IMR-90 (cell line): ENCODE measurements at regions of chr12 and their contacts with region 1.

Region 1: GRCh38 chr12:100058482-100059029 is 73.8 kb upstream of the ANKS1B start:
- DNase-seq: peak; percentile 96
- ATAC-seq: peak; percentile 91
- H3K4me3 ChIP-seq: no peak overlapping the region
- H3K27ac ChIP-seq: no peak overlapping the region
- H3K4me1 ChIP-seq: no peaks in the 10 kb centered on the region
- H3K27me3 ChIP-seq: no peaks in the 10 kb centered on the region
- CTCF ChIP-seq: peak; percentile 58
- POLR2A ChIP-seq: no peak
- RAD21 ChIP-seq: peak; percentile 73

Region 2: DNA sequence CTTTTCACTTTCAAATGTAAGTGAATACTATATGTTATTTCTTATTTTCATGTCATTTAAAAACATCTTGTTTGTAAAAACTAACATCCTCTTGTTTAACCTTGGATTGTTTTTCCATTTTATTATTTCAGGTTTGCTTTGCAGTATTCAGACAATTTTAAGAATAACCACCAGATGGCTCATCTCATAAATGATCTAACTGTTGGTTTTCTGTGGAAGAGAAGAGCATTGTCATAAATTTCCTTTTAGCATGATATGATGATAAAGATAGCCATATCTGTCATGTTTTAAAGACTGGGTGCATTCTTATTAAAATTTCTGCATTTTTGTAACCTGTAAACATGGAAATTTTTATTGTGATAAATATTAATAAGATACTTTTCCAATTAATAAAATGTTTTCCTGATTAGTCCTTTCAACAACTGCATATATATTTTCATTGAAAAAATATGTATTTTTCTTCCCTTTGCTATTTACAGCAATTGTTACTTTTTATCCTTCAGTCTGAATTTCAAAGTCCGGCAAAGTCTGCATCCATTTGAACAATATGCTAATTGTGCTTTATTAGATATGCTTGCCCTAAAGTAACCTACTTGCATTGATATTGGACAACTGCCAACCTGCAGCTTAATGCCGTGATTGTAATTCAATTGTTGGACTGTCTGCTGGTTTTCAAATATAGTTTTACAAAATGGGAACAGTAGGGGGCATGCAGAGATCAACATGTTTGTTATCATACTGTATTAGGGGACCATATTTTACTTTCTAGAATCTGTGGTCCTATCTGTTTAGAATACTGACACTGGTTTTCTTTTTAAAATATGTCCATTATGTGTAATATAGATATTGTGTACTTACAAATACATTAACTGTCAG is 247.6 kb before region 1 on chr12:
- CTCF ChIA-PET with region 1: no interaction called
- POLR2A ChIA-PET with region 1: no interaction called
- dilution Hi-C with region 1: no loop called
- in situ Hi-C with region 1: no loop called
- intact Hi-C with region 1: loop called (anchors 10 kb)
- DNase-seq: peak; percentile 18
- ATAC-seq: no peak
- H3K4me3 ChIP-seq: no peak overlapping the region
- H3K27ac ChIP-seq: no peak overlapping the region
- H3K4me1 ChIP-seq: no peaks in the 10 kb centered on the region
- H3K27me3 ChIP-seq: no peaks in the 10 kb centered on the region
- CTCF ChIP-seq: peak; percentile 33
- POLR2A ChIP-seq: no peak
- RAD21 ChIP-seq: peak; percentile 33; the same call in 1 of the 2 replicates

Region 3: DNA sequence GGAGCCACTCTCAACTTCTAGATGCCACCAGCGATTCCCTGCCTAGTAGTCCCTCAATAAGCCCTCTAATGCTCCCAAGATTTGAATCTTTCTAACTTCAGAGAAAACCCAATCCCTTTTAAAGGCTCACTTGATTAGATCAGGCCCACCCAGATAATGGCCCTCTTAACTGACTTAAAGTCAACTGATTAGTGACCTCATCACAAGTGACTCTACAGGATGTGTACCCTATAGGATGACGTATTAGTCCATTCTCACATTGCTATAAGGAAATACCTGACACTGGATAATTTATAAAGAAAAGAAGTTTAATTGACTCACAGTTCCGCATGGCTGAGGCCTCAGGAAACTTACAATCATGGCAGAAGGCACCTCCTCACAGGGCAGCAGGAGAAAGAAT is 122.9 kb before region 1 on chr12:
- CTCF ChIA-PET with region 1: no interaction called
- POLR2A ChIA-PET with region 1: no interaction called
- dilution Hi-C with region 1: no loop called
- in situ Hi-C with region 1: no loop called
- intact Hi-C with region 1: no loop called
- DNase-seq: no peak
- ATAC-seq: no peak
- H3K4me3 ChIP-seq: no peak overlapping the region
- H3K27ac ChIP-seq: no peak overlapping the region
- H3K4me1 ChIP-seq: no peaks in the 10 kb centered on the region
- H3K27me3 ChIP-seq: no peaks in the 10 kb centered on the region
- CTCF ChIP-seq: no peak
- POLR2A ChIP-seq: no peak
- RAD21 ChIP-seq: no peak

Region 4: GRCh38 chr12:100215209-100215608 is 156.7 kb after region 1 on chr12:
- CTCF ChIA-PET with region 1: no interaction called
- POLR2A ChIA-PET with region 1: no interaction called
- dilution Hi-C with region 1: no loop called
- in situ Hi-C with region 1: no loop called
- intact Hi-C with region 1: loop called (anchors 5 kb)
- DNase-seq: no peak
- ATAC-seq: no peak
- H3K4me3 ChIP-seq: no peak overlapping the region
- H3K27ac ChIP-seq: no peak overlapping the region
- H3K4me1 ChIP-seq: no peaks in the 10 kb centered on the region
- H3K27me3 ChIP-seq: no peaks in the 10 kb centered on the region
- CTCF ChIP-seq: no peak
- POLR2A ChIP-seq: no peak
- RAD21 ChIP-seq: no peak

Region 5: DNA sequence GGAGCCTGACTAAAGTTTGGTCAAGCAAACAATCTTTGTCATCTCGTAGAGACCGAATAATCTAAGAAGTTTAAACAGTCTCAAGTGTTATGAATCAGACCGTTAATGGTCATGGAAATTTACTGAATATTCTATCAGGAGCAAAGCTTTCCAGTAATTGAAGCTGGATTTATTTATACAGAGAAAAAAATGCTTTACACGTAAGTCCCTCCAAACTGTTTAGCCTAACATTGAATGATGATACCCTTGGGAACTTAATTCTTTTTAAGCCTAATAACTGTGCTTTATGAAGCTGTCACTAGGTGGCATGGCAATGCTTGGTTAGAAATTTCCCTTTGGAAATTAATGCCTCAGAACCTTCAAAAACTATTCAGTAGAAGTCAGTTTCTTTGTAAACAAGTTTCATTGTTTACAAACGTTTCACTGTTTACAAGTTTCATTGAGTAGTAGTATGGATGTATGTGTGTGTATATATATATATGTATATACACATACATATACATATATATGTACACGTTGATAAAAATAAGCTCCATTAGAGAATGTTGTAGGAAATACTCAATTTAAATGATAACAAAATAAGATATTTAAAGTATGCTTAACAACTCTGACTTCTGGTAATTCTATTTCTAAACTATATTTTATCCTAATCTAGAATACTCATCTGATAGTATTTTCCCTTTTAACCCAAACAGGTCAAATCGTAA is 176.2 kb after region 1 on chr12:
- CTCF ChIA-PET with region 1: no interaction called
- POLR2A ChIA-PET with region 1: no interaction called
- dilution Hi-C with region 1: no loop called
- in situ Hi-C with region 1: no loop called
- intact Hi-C with region 1: loop called (anchors 1 kb)
- DNase-seq: peak; percentile 86
- ATAC-seq: peak; percentile 94
- H3K4me3 ChIP-seq: no peak overlapping the region
- H3K27ac ChIP-seq: peak overlapping the region; percentile 46; the same call in 1 of the 2 replicates
- H3K4me1 ChIP-seq: peaks cover 3% of the 10 kb centered on the region
- H3K27me3 ChIP-seq: no peaks in the 10 kb centered on the region
- CTCF ChIP-seq: peak; percentile 91
- POLR2A ChIP-seq: no peak
- RAD21 ChIP-seq: peak; percentile 80

Region 6: DNA sequence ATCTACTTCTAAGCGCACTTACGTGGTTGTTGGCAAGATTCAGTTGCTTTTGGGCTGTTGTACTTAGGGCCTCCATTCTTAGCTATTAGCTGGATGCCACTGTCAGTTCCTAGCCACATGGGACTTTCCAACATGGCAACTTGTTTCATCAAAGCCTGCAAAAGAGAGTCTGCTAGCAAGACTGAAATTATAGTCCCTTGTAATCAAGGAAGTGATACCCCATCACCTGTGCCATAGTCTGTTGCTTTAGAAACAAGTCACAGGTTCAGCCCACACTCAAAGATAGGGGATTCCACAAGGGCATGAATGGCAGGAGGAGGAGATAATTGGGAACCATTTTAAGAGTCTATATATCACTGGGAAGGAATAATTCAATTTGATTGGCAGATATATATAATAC is 271.2 kb after region 1 on chr12:
- CTCF ChIA-PET with region 1: no interaction called
- POLR2A ChIA-PET with region 1: no interaction called
- dilution Hi-C with region 1: no loop called
- in situ Hi-C with region 1: no loop called
- intact Hi-C with region 1: loop called (anchors 10 kb)
- DNase-seq: no peak
- ATAC-seq: no peak
- H3K4me3 ChIP-seq: no peak overlapping the region
- H3K27ac ChIP-seq: no peak overlapping the region
- H3K4me1 ChIP-seq: peaks cover 7% of the 10 kb centered on the region
- H3K27me3 ChIP-seq: no peaks in the 10 kb centered on the region
- CTCF ChIP-seq: no peak
- POLR2A ChIP-seq: no peak
- RAD21 ChIP-seq: no peak